Activated B cell treated with CpG ODN at 0.5 μM for 24 hours (primary cell): ENCODE measurements at regions of chr1 and their contacts with region 1.

Region 1: DNA sequence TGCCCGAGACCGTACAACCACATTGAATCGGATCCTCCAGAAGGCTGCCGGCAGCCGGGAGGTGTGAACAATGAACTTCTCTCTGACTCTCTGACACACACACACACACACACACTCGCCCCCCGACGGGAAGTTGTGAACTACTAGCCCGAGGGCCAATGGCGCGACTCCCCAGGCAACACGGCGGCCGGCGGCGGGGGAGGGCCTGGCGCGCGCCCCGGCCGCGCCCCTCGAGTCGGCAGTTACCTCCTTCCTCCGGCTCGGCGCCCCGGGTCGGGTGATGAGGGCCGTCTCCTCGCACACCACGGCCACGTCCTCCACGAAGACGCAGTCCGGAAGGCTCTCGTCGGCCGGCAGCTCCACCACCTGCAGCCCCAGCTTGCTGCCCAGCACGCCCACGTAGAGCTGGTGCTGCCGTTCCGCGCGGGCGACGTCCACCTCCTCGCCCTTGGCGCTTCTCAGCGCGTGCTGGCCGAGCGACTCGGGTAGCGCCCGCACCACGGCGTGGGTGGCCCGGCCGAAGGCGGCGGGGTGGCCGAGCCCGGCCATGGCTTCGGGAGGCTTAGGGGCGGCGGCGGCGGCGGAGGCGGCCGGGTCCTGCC is 361 bp downstream of the DDAH1 start:
- DNase-seq: peak; percentile 26
- ATAC-seq: peak; percentile 70
- H3K4me3 Mint-ChIP-seq: peak overlapping the region; percentile 76
- H3K27ac Mint-ChIP-seq: no peak overlapping the region
- H3K4me1 Mint-ChIP-seq: peaks cover 7% of the 10 kb centered on the region
- H3K27me3 Mint-ChIP-seq: peaks cover 44% of the 10 kb centered on the region
- CTCF ChIP-seq: no peak

Region 2: DNA sequence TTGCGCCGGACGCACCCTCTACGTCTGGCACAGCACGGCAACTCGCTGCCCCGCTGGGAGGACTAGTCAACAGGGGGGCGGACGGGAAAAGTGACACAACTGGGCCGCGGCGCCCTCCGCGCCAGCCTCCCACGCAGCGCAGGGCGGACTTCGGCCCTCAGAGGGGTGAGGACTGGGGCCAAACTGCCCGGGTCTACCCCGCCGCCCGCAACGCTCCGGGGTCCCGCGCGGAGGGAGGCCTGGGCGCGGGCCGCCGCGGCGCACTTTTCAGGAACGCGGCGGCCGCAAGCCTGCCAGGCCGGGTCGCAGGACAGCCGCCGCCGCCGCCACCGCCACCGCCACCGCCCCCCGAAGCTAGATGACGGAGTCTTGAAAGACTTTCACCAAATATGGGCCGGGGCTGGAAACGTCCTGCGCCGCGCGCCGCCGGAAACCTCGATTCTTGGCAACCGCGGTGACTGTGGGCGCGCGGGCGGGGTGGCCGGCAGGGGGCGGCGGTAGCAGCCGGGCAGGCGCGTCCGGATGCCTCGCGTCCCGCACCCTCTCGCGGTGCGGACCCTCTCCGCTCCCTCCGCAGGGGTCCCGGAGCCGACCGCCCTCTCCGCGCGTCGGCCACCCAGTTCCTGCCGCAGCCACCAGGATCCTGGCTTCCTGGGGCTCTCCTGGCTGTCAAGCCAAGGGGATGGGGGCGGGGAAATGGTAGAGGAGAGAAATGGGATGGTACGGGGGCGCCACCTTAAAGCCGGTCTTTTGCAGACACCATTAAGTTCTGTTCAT is 112.2 kb after region 1 on chr1:
- CTCF ChIA-PET with region 1: no interaction called
- POLR2A ChIA-PET with region 1: no interaction called
- intact Hi-C with region 1: loop called (anchors 5 kb)
- DNase-seq: peak; percentile 42
- ATAC-seq: peak; percentile 77
- H3K4me3 Mint-ChIP-seq: peak overlapping the region; percentile 74
- H3K27ac Mint-ChIP-seq: no peak overlapping the region
- H3K4me1 Mint-ChIP-seq: peaks cover 32% of the 10 kb centered on the region
- H3K27me3 Mint-ChIP-seq: peaks cover 62% of the 10 kb centered on the region
- CTCF ChIP-seq: no peak